Activated naive CD4-positive, alpha-beta T cell treated with anti-CD3 and anti-CD28 coated beads, Interleukin-2, amount 10 ng/mL, durations not matched to agents 7 days and 5 days (primary cell): ENCODE measurements at regions of chr10 and their contacts with region 1.

Region 1: DNA sequence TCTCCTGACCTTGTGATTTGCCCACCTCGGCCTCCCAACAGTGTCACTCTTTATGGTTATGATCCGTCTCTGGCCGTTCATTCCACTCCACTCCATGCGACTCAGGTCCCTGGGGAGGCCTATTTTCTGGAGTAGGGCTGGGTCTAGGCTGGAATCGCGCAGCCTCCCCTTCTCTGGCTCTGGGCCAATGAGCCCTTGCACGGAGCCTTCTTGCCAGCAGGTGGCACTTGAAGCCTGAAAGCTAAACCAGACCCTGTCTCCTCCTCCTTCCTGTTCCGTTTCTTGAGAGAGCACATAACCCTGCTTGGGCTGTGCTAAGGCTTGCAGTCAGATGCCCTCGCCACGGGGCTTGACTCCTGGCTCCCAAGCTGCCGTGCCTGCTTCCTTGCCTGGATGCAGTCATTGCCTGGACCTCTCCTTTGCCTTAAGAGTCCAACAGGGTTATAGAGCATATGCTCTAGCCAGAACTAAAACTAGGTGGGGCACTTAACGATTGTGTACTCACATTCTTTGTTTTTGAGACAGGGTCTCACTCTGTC is 9.6 kb upstream of the DNAJB12 start:
- DNase-seq: peak; percentile 92
- H3K4me3 Mint-ChIP-seq: peak overlapping the region; percentile 3
- H3K27ac Mint-ChIP-seq: peak overlapping the region; percentile 35
- H3K4me1 Mint-ChIP-seq: peaks cover 14% of the 10 kb centered on the region
- H3K27me3 Mint-ChIP-seq: peaks cover 15% of the 10 kb centered on the region

Region 2: DNA sequence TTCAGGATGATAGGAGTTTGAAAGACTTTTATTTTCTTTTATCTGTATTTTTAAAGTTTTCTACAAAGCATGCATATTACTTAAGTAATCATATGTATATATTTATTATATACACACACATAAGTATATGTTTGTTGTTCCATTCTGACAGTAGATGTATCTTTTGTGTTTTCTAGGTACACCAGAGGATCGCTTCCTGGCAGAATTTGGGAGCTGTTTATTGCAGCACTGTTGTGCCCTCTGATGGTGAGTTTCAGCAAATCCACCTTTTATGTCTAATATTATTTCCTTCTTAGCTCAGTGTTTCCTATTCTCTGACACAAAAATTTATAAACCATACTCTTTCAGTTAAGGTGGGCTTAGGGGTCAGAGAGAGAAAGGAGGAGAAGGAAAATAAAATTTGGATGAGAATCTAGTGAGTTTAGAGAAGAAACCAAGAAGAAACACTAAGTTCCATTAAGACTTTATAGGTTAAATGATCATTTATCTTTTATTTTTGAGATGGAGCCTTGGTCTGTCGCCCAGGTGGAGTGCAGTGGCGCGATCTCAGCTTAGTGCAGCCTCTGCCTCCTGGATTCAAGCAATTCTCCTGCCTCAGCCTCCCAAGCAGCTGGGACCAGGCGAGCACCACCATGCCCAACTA is 470.0 kb after region 1 on chr10:
- CTCF ChIA-PET with region 1: interaction called, 48 read pairs
- DNase-seq: peak; percentile 59
- H3K4me3 Mint-ChIP-seq: no peak overlapping the region
- H3K27ac Mint-ChIP-seq: no peak overlapping the region
- H3K4me1 Mint-ChIP-seq: no peaks in the 10 kb centered on the region
- H3K27me3 Mint-ChIP-seq: no peaks in the 10 kb centered on the region

Region 3: DNA sequence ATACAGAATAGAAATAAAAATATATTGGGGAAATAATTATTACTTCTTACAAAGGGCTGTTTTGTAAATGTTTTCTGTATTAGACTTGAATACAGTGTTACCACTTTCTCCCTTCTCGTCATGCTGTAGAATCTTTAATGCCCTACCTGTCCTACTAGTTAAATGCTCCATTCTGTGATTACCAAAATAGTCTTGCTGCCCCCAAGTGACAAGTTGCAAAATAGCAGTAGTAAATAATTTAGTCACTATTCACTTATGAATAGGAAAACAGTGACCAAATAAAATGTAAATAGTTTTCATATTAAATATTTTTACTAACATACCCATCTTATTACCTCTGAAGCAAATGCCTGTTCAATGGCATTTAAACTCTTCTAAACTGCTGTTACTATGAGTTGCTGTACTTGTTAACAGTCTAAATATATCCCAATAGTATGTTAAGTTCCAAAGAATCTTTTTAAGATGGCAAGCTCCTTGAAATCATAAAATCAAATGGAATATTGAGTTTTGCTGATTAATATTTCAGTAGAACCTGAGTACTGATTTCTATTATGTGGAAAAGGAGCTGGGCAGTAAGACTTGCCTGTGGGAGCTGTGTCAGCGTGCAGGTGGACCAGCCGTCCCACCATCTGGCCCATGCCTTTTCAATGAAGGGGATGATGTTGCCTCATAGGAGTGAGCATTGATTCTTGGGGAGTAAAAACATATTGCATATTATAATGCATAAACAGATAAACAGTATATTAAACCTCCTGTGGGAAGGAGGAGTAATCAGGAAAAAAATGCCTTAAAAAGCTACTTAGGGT is 511.1 kb after region 1 on chr10:
- CTCF ChIA-PET with region 1: interaction called, 11 read pairs
- DNase-seq: no peak
- H3K4me3 Mint-ChIP-seq: no peak overlapping the region
- H3K27ac Mint-ChIP-seq: no peak overlapping the region
- H3K4me1 Mint-ChIP-seq: no peaks in the 10 kb centered on the region
- H3K27me3 Mint-ChIP-seq: no peaks in the 10 kb centered on the region